Activated T-helper 1 cell treated with anti-CD3 and anti-CD28 coated beads, Interleukin-12 subunit alpha, Interleukin-12 subunit beta, Interleukin-2, Interleukin-4 antibody, amounts not matched to agents 30 ng/mL and 10 ng/mL and 1 ng/mL, durations not matched to agents 14 hours and 24 hours and 36 hours (primary cell): ENCODE measurements at regions of chr6 and their contacts with region 1.

Region 1: DNA sequence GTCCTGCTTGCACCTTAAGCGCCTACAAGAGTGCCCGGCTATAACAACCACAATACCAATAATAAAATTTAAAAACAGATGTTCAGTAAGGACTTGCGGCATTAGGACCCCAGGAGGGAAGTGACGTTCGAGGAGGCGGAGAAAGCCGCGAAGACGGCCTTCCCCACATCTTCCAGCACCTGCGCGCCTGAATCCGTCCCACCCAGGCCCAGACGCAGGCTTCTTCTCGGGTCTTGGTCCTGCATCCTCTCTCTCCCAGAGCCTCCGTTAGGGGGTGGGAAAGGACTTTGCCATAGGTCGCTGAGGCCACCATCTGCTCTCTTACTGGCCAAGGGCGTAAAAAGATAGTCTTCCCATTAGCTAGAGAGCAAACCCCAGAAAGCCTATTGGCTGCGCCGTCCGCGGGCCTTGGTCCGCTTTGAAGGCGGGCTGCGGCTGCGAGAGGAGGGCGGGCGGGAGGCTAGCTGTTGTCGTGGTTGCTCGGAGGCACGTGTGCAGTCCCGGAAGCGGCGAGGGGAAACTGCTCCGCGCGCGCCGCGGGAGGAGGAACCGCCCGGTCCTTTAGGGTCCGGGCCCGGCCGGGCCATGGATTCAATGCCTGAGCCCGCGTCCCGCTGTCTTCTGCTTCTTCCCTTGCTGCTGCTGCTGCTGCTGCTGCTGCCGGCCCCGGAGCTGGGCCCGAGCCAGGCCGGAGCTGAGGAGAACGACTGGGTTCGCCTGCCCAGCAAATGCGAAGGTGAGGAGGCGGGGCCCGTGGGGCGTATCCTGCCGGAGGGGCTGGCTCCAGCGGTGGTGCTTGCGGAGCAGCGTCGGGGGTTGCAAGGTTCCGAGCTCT is at the start of gene CNPY3:
- DNase-seq: peak; percentile 93
- H3K4me3 Mint-ChIP-seq: peak within 1 kb of the TSS; percentile 99
- H3K27ac Mint-ChIP-seq: peak within 1 kb of the TSS; percentile 98
- H3K4me1 Mint-ChIP-seq: peaks cover 38% of the 10 kb centered on the region
- H3K27me3 Mint-ChIP-seq: no peaks in the 10 kb centered on the region
- total RNA-seq, gene CNPY3: 47.2 and 49.2 TPM in 2 replicates

Region 2: GRCh38 chr6:42879372-42880239 is 49.6 kb before region 1 on chr6 and contains the start of gene RPL7L1:
- intact Hi-C with region 1: loop called (anchors 1 kb)
- DNase-seq: peak; percentile 82
- H3K4me3 Mint-ChIP-seq: peak within 1 kb of the TSS; percentile 96
- H3K27ac Mint-ChIP-seq: peak within 1 kb of the TSS; percentile 97
- H3K4me1 Mint-ChIP-seq: peaks cover 30% of the 10 kb centered on the region
- H3K27me3 Mint-ChIP-seq: no peaks in the 10 kb centered on the region
- total RNA-seq, gene RPL7L1: 179 TPM in 2 replicates

Region 3: DNA sequence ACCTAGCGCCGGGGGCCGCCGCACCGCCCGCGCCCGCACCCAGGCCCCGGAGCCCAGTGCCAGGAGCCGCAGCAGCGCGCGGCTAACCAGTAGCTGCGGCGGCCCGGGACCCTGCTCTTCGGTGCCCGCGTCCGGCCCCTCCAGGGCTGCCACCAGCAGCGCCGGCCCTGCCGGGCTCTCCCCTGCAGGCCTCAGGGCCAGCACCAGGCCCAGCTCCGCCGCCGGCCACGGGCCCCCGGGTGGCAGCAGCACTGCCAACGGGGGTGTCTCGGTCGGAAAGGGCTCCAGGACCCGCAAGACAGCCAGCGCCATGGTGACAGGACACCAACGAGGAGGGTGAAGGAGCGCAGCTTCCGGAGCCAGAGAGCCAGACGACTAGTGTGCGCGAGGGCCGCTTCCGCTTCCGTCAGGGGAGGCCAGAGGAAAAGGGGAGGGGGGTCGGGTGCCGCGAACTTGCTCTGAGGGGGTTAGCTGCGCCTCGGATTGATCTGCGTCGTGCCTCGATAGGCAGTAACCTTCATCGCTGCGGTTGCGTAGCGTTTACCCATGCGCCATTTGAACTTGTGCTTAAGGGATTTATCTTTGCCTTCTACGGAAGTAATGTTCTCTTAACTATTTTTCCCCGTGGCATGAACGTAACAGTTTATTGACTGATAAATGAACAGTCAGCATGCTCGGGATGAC is 49.8 kb after region 1 on chr6 and contains the start of gene PEX6:
- intact Hi-C with region 1: loop called (anchors 1 kb)
- DNase-seq: peak; percentile 94
- H3K4me3 Mint-ChIP-seq: peak within 1 kb of the TSS; percentile 91
- H3K27ac Mint-ChIP-seq: peak within 1 kb of the TSS; percentile 96
- H3K4me1 Mint-ChIP-seq: peaks cover 38% of the 10 kb centered on the region
- H3K27me3 Mint-ChIP-seq: no peaks in the 10 kb centered on the region
- total RNA-seq, gene PEX6: 20.9 TPM in 2 replicates

Region 4: GRCh38 chr6:43013843-43014433 is 84.7 kb after region 1 on chr6 and contains the starts of genes KLHDC3 and MEA1:
- intact Hi-C with region 1: loop called (anchors 1 kb)
- DNase-seq: peak; percentile 99
- H3K4me3 Mint-ChIP-seq: peak within 1 kb of the TSS; percentile 93
- H3K27ac Mint-ChIP-seq: peak within 1 kb of the TSS; percentile 78
- H3K4me1 Mint-ChIP-seq: peaks cover 41% of the 10 kb centered on the region
- H3K27me3 Mint-ChIP-seq: peaks cover 2% of the 10 kb centered on the region
- total RNA-seq, gene KLHDC3: 76.6 and 77.0 TPM in 2 replicates
- total RNA-seq, gene MEA1: 89.3 and 92.7 TPM in 2 replicates

Region 5: DNA sequence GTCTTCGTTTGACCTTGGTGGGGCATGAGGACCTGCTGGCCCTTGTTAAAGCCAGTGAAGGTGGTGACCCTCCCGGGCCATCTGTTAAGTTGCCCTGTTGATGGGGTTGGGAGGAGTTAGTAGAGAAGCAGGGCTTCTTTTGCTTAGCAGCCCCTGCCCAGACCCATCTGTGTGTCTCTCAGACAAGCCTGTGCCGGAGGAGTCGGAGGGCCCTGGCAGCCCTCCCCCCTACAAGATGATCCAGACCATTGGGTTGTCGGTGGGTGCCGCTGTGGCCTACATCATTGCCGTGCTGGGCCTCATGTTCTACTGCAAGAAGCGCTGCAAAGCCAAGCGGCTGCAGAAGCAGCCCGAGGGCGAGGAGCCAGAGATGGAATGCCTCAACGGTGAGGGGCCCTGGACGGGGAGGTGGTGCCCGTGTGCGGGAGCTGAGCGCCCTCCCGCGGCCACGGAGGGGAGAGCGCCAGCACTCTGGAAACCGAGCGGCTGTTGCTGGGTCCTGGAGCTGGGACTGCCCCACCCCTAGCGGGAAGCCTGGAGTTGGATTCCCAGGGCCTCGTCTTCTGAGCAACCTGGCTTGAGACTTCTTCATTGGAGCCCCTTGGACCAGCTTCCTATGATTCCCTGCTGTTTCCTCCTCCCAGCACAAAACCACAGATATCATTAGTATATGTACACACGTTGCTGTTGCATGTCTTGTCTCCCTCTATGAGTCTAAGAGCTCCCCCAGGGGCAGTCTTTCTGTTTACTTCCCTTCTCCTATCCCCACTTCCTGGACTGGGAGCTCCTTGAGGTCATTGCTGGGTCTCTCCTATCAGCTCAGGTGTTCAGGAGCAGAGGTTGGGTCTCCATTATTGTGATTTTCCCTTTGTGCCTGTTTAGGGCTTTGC is 214.3 kb after region 1 on chr6:
- intact Hi-C with region 1: loop called (anchors 1 kb)
- DNase-seq: peak; percentile 63
- H3K4me3 Mint-ChIP-seq: no peak overlapping the region
- H3K27ac Mint-ChIP-seq: peak overlapping the region; percentile 14
- H3K4me1 Mint-ChIP-seq: no peaks in the 10 kb centered on the region
- H3K27me3 Mint-ChIP-seq: no peaks in the 10 kb centered on the region

Region 6: DNA sequence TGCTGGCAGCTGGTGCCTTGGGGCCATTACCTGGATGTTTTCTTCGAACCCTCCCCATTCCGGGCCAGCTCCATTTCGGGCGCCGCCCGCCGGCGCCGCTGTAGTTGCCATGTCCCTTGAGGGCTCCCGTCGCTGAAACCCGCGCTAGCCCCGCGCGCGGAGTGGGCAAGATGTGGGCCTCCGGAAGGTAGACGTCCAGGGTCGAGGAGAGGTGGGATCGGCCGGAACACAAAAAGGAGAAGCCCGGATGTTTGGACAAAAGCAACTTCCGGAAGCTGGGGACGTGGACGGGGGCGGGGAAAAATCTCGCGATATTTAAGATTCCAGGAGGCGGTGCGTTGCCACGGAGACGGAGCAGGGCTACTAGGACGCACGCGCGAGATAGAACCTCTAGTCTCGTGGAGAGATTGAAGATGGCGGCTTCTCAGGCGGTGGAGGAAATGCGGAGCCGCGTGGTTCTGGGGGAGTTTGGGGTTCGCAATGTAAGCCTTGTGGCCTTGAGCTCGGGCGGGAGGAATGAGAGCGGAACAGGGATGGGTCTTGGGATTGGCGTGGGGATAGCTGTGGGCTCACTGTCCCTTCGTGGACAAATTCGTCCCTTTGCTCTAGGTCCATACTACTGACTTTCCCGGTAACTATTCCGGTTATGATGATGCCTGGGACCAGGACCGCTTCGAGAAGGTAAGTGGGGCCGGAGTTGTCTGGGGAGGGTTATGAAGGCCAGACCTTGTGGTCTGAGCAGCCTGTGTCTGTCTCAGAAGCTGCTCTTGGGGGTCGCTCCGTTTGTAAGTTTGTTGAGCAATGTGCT is 587.7 kb after region 1 on chr6 and contains the starts of genes POLR1C and YIPF3:
- intact Hi-C with region 1: no loop called
- DNase-seq: peak; percentile 95
- H3K4me3 Mint-ChIP-seq: no peak within 1 kb of the TSS
- H3K27ac Mint-ChIP-seq: no peak within 1 kb of the TSS
- H3K4me1 Mint-ChIP-seq: peaks cover 20% of the 10 kb centered on the region
- H3K27me3 Mint-ChIP-seq: no peaks in the 10 kb centered on the region
- total RNA-seq, gene POLR1C: 85.8 and 98.0 TPM in 2 replicates
- total RNA-seq, gene YIPF3: 60.2 and 62.5 TPM in 2 replicates